ENCODE measurements at regions of chr9 and their contacts with region 1.

Region 1: DNA sequence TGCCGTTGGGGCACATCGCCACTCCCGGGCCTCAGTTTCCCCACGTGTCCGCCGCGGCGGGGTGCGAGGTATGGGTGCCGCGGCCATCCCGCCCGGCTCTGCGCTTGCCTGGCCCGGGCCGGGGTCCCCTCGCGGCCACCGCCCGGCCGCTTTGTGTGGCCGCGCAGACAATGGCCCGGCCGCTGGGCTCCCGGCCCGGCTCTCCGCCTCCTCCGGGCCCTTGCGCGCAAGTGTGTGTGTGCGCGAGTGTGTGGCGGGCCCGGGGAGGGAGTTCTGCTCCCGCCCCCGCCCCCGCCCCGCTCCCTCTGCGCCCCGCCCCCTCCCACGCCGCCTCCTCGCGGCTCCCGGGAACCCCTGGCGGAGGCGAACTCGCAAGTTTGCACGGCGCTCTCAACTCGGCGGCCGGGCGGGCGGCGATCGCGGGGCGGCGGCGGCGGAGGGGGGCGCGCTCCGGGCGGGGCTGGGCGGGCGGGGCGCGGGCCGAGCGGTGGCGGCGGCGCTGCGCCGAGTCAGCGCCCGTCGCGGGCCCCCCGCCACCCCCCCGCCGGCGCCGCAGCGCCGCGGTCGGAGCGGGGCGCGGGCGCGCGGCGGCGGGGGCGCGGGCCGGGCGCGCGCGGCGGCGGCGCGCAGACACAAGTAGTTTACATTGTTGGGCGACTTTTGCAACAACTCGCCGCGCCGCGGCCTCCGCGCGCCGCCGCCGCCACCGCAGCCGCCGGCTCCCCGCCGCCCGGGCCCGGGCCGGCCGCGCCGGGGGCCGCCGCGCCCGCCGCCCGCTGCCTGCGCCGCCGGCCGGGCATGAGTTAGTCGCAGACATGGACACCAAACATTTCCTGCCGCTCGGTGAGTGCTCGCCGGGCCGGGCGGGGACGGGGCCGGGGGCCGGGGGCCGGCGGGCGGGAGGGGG is at the start of gene RXRA:
- DNase-seq: peak; percentile 53 to 86
- ATAC-seq: peak; percentile 68 to 79 (median 75)
- H3K4me3 ChIP-seq: peak within 1 kb of the TSS; percentile 46
- H3K4me3 Mint-ChIP-seq: peak within 1 kb of the TSS; percentile 86
- H3K27ac ChIP-seq: no peak within 1 kb of the TSS
- H3K27ac Mint-ChIP-seq: peak within 1 kb of the TSS in 1 of 2 donors; percentile 87
- H3K4me1 ChIP-seq: peaks cover 40% of the 10 kb centered on the region
- H3K4me1 Mint-ChIP-seq: peaks cover 0 to 33% of the 10 kb centered on the region in 2 donors
- H3K27me3 ChIP-seq: peaks cover 10% of the 10 kb centered on the region
- H3K27me3 Mint-ChIP-seq: no peaks in the 10 kb centered on the region
- CTCF ChIP-seq: no peak
- total RNA-seq, gene RXRA: 30.9 to 64.1 (median 42.2) TPM

Region 2: DNA sequence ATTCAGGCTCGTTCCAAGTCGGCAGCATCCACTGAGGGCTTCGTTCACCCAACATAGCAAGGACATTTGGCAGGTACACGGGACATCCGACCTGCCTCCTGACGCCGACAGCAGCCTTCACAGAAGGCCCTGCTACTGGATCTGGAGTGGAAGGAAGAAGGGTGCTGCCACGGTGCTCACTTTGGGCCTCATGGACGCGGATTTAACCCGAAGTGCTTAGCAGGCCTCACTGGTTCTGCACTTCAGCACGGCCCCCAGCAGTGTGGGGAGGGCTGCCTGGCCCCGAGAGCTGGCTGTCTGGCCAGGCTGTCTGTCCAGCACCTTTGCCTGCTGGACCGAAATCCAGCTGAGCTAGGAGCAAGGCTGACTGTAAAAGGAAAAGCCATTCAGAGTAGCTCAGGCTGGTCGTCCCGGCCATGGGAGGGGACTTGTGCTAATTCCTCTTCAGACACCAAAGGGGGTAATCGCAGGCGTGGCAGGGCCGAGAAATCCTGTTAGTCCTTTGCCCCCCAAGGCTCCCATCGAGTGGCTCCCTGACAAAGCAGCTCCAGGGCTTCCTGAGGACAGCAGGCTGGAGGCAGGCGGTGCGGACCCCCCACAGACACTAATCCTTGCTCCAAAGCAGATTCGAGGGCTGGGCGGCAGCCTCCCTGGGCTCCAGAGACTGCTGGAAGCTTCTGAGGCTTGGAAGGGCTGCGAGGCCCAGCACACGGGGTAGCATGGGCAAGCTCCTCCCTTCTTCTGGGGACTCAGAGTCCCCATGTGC is 10.9 kb before region 1 on chr9:
- intact Hi-C with region 1: no loop called
- DNase-seq: no peak
- ATAC-seq: no peak
- H3K4me3 ChIP-seq: no peak overlapping the region
- H3K4me3 Mint-ChIP-seq: no peak overlapping the region
- H3K27ac ChIP-seq: no peak overlapping the region
- H3K27ac Mint-ChIP-seq: no peak overlapping the region
- H3K4me1 ChIP-seq: no peaks in the 10 kb centered on the region
- H3K4me1 Mint-ChIP-seq: peaks cover 0 to 5% of the 10 kb centered on the region in 2 donors
- H3K27me3 ChIP-seq: no peaks in the 10 kb centered on the region
- H3K27me3 Mint-ChIP-seq: peaks cover 16 to 20% of the 10 kb centered on the region in 2 donors
- CTCF ChIP-seq: no peak

Region 3: GRCh38 chr9:134399435-134400056 is 73.5 kb after region 1 on chr9:
- intact Hi-C with region 1: loop called (anchors 10 kb)
- DNase-seq: peak in 1 of 2 donors; percentile 50
- ATAC-seq: no peak
- H3K4me3 ChIP-seq: no peak overlapping the region
- H3K4me3 Mint-ChIP-seq: peak overlapping the region; percentile 31
- H3K27ac ChIP-seq: no peak overlapping the region
- H3K27ac Mint-ChIP-seq: no peak overlapping the region
- H3K4me1 ChIP-seq: peaks cover 73% of the 10 kb centered on the region
- H3K4me1 Mint-ChIP-seq: peaks cover 51 to 67% of the 10 kb centered on the region in 2 donors
- H3K27me3 ChIP-seq: no peaks in the 10 kb centered on the region
- H3K27me3 Mint-ChIP-seq: no peaks in the 10 kb centered on the region
- CTCF ChIP-seq: peak; percentile 55

Region 4: DNA sequence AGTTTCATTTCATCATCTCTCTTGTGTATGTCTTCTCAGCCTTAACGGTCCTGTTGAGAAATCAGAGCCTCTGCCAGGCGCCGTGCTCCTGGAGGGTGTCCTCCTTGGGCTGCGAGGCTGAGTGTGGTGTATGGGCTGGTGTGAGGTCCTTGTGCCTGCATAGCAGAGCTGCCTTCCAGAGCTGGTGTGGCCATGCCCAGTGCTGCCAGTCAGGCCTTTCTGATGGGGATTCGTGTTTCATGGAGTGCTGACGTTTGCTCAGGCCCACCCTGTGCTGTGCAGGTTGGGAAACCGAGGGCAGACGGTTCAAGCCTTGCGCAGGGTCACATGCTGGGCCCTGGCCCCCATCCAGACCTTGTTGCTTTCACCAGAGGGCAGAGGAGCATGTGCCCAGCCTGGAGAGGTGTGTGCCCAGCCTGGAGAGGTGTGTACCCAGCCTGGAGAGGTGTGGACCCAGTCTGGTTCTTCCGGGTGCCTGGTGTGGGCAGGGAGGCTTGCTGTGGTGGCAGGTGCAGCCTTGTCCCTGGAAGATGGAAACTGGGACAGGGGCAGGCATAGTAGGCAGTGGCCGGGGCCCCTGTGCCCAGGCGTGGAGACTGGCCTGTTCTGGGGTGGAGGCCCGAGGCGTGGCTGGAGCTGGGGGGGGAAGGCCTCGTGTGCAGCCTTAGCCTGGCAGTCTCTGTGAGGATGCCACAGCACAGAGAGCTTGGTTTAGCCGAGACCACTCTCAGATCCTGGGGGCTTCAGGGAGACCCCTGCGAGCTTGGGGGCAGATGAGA is 84.2 kb after region 1 on chr9:
- intact Hi-C with region 1: no loop called
- DNase-seq: no peak
- ATAC-seq: no peak
- H3K4me3 ChIP-seq: no peak overlapping the region
- H3K4me3 Mint-ChIP-seq: peak overlapping the region; percentile 31
- H3K27ac ChIP-seq: no peak overlapping the region
- H3K27ac Mint-ChIP-seq: peak overlapping the region; percentile 16 to 69
- H3K4me1 ChIP-seq: peaks cover 73% of the 10 kb centered on the region
- H3K4me1 Mint-ChIP-seq: peaks cover 26 to 53% of the 10 kb centered on the region in 2 donors
- H3K27me3 ChIP-seq: no peaks in the 10 kb centered on the region
- H3K27me3 Mint-ChIP-seq: no peaks in the 10 kb centered on the region
- CTCF ChIP-seq: no peak

Region 5: GRCh38 chr9:134551650-134552348 is 225.7 kb after region 1 on chr9:
- intact Hi-C with region 1: no loop called
- DNase-seq: no peak
- ATAC-seq: no peak
- H3K4me3 ChIP-seq: no peak overlapping the region
- H3K4me3 Mint-ChIP-seq: no peak overlapping the region
- H3K27ac ChIP-seq: no peak overlapping the region
- H3K27ac Mint-ChIP-seq: no peak overlapping the region
- H3K4me1 ChIP-seq: no peaks in the 10 kb centered on the region
- H3K4me1 Mint-ChIP-seq: no peaks in the 10 kb centered on the region
- H3K27me3 ChIP-seq: no peaks in the 10 kb centered on the region
- H3K27me3 Mint-ChIP-seq: no peaks in the 10 kb centered on the region
- CTCF ChIP-seq: no peak